K562 (cell line): ENCODE measurements at regions of chr19 and their contacts with region 1.

Region 1: DNA sequence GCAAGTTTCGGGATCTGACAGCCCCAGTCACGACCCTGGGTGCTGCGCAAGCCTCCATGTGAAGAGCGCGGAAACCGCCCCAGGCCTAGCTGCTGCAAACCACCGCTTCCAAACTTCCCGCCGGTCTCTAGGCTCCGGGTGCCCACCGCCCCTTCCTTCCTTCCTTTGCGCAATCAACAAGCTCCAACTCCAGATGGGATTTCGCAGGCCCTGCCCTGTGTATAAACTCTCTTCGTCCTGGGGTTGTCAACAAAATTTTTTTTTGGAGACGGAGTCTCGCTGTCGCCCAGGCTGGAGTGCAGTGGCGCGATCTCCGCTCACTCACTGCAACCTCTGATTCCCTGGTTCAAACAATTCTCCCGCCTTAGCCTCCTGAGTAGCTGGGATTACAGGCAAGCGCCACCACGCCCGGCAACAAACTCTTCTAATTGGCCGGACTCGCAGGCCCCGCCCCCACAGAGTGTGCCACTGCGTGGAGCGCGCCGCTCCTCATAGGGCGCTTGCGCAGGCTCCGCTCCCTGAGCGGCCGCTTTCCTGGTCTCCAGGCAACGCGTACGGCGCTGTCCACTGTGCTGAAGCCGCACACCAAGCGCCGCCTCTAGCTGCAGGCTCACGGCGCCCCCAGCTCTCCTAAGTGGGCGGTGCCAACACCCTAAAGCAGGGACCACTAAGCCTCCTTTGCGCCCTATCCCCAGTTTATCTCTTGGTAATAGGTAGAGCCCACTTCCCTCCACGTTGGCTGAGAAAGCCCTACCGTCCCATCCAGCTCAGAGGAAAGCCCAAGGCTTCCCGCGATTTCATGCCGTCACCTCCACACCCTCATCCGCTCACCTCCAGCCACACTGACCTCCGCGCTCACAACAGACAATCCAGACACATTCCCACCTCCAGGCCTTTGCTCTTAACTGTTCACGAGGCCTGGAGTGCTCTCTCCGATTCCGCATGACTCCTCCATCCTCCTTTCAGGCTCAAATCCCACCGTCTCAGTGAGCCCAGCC is 5.5 kb upstream of the QTRT1 start:
- DNase-seq: peak; percentile 96 to 98 (median 98)
- ATAC-seq: peak; percentile 99
- H3K4me3 ChIP-seq: 0 out of 2 replicates have a peak overlapping the region, but pooled peaks have one; percentile 8
- H3K27ac ChIP-seq: no peak overlapping the region
- H3K4me1 ChIP-seq: peaks cover 6 to 19% of the 10 kb centered on the region in 2 experiments; a peak in 4 of 5 replicates
- H3K27me3 ChIP-seq: peaks cover 4 to 7% of the 10 kb centered on the region in 2 experiments; a peak in 2 of 5 replicates
- CTCF ChIP-seq: peak in 2 of 3 experiments; percentile 16 to 26; a peak in 2 of 6 replicates
- EP300 ChIP-seq: no peak
- POLR2A ChIP-seq: no peak; the same call in 1 of the 2 replicates
- RAD21 ChIP-seq: peak; percentile 15 to 26; a peak in 2 of 4 replicates

Region 2: GRCh38 chr19:10403137-10404021 is 292.3 kb before region 1 on chr19 and contains the start of gene CDC37:
- CTCF ChIA-PET with region 1: no interaction called
- POLR2A ChIA-PET with region 1: no interaction called
- in situ Hi-C with region 1: no loop called
- intact Hi-C with region 1: loop called (anchors 5 kb)
- DNase-seq: peak; percentile 94 to 97 (median 96)
- ATAC-seq: peak; percentile 87
- H3K4me3 ChIP-seq: peak within 1 kb of the TSS; percentile 99
- H3K27ac ChIP-seq: peak within 1 kb of the TSS; percentile 76
- H3K4me1 ChIP-seq: peaks cover 18 to 50% of the 10 kb centered on the region in 2 experiments
- H3K27me3 ChIP-seq: no peaks in the 10 kb centered on the region
- CTCF ChIP-seq: no peak
- EP300 ChIP-seq: no peak
- POLR2A ChIP-seq: peak; percentile 90
- RAD21 ChIP-seq: no peak
- polyA plus RNA-seq, gene CDC37: 6.6 to 12.8 TPM

Region 3: DNA sequence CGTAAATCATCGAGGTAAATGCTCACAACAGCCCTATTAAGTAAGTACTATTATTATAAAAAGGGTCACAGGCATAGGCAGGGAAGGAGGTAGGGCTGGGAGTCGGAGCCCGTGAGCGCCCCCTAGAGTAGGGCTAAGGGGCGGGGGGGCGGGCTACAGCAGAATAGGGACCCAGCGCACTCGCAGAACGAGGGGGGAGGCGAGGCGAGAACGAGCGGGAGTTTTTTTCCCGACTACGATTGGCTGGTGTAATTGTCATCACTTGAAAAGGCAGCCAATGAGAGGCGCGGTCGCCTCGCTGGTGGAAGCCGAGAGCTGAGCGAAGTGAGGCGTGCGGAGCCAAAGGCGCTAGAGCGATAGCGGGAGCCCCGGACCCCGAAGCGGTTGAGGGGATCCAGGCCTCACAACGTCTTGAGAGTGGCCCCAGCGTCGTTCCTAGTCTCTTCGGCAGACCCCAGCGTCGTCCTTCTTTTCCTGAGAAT is 216.8 kb before region 1 on chr19:
- CTCF ChIA-PET with region 1: interaction called, 14 read pairs
- POLR2A ChIA-PET with region 1: interaction called, 5 read pairs
- in situ Hi-C with region 1: loop called (anchors 5 kb)
- intact Hi-C with region 1: loop called (anchors 5 kb)
- DNase-seq: peak; percentile 91 to 96 (median 94)
- ATAC-seq: peak; percentile 96
- H3K4me3 ChIP-seq: no peak overlapping the region
- H3K27ac ChIP-seq: no peak overlapping the region
- H3K4me1 ChIP-seq: peaks cover 14 to 26% of the 10 kb centered on the region in 2 experiments; a peak in 4 of 5 replicates
- H3K27me3 ChIP-seq: no peaks in the 10 kb centered on the region
- CTCF ChIP-seq: peak; percentile 61 to 78 (median 62)
- EP300 ChIP-seq: no peak
- POLR2A ChIP-seq: 0 out of 2 replicates have a peak, but pooled peaks have one; percentile 44
- RAD21 ChIP-seq: no peak

Region 4: DNA sequence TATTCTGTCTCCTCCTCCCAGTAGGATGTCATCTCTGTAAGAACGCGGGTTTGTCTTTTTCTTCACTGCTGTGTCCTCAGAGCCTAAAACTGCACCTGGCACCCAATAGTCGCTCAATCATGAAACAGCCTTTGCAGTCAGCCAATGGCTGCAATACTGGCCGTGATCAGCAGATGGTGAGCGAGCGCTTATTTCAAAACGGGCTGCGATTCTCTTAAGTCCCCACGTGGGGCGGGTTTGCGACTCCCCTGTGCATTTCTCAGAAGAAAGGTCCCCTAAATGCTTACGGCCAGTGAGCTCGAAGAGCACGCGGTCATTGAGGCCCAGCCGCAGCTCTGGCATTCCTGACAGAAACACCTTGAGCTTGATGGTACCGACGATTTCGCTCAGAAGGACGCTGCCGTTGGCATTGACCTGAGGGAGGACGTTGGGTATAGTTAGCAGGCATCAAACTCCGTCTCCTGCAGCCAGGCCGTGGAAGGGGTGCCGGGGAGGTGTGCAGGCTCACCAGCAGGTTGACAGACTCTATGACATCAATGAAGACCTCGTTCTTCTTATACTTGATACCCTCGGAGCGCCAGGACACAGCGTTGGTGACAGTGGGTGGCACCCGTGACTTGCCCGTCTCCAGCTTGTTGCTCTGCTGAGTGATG is 114.6 kb before region 1 on chr19:
- CTCF ChIA-PET with region 1: interaction called, 50 read pairs
- POLR2A ChIA-PET with region 1: interaction called, 5 read pairs
- in situ Hi-C with region 1: loop called (anchors 5 kb)
- intact Hi-C with region 1: loop called (anchors 1 kb)
- DNase-seq: peak; percentile 78 to 96 (median 82)
- ATAC-seq: peak; percentile 87
- H3K4me3 ChIP-seq: no peak overlapping the region
- H3K27ac ChIP-seq: no peak overlapping the region
- H3K4me1 ChIP-seq: peaks cover 12 to 19% of the 10 kb centered on the region in 2 experiments; a peak in 4 of 5 replicates
- H3K27me3 ChIP-seq: no peaks in the 10 kb centered on the region
- CTCF ChIP-seq: peak; percentile 100
- EP300 ChIP-seq: no peak
- POLR2A ChIP-seq: no peak
- RAD21 ChIP-seq: peak; percentile 99 to 100

Region 5: DNA sequence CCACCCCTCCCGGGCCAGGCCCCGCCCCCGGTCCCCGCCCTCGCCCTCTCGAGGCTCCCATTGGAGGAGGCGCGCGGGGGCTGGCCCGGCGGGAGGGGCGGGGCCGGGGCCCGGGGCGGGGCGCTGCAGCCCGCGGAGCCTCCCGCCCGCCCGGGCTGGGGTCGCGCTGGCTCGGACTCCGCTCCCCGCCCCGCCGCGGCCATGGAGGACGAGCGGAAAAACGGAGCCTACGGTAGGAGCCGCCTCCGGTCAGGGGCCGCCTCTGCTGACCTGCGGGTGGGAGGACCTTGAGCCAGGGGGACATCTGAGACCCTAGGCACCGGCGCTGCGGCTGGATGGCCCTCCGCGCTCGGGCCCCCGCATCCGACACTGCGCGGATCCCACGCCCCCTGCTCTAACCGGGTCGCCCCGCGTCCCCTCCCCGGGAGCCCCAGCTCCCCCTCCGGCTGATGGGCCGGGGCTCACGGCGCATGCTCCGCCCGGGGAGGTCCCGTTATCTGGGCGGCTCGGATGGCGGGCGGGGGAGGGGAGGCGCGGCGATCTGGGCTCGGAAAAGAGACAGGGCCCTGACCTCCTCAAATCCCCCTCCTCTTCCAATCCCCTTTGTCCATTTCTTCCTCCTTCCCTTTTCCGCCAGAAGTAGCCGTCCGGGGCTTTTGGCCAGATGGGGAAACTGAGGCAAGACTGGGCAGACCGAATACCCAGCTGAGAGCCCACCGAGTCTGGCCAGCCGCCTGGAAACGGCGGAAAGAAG is 93.2 kb before region 1 on chr19:
- CTCF ChIA-PET with region 1: no interaction called
- POLR2A ChIA-PET with region 1: no interaction called
- in situ Hi-C with region 1: no loop called
- intact Hi-C with region 1: no loop called
- DNase-seq: peak; percentile 86 to 99 (median 98)
- ATAC-seq: peak; percentile 97
- H3K4me3 ChIP-seq: peak overlapping the region; percentile 98
- H3K27ac ChIP-seq: peak overlapping the region; percentile 91
- H3K4me1 ChIP-seq: peaks cover 24 to 29% of the 10 kb centered on the region in 2 experiments
- H3K27me3 ChIP-seq: peaks cover 4 to 9% of the 10 kb centered on the region in 2 experiments; a peak in 3 of 5 replicates
- CTCF ChIP-seq: no peak
- EP300 ChIP-seq: no peak
- POLR2A ChIP-seq: peak; percentile 72
- RAD21 ChIP-seq: no peak

Region 6: GRCh38 chr19:10653715-10654492 is 41.8 kb before region 1 on chr19 and contains the start of gene ILF3:
- CTCF ChIA-PET with region 1: interaction called, 3 read pairs
- POLR2A ChIA-PET with region 1: interaction called, 7 read pairs
- in situ Hi-C with region 1: no loop called
- intact Hi-C with region 1: loop called (anchors 2 kb)
- DNase-seq: peak; percentile 90 to 100 (median 94)
- ATAC-seq: peak; percentile 86
- H3K4me3 ChIP-seq: peak within 1 kb of the TSS; percentile 90
- H3K27ac ChIP-seq: peak within 1 kb of the TSS; percentile 99
- H3K4me1 ChIP-seq: peaks cover 33 to 35% of the 10 kb centered on the region in 2 experiments; a peak in 4 of 5 replicates
- H3K27me3 ChIP-seq: no peaks in the 10 kb centered on the region
- CTCF ChIP-seq: no peak
- EP300 ChIP-seq: peak; percentile 23; the same call in 1 of the 2 replicates
- POLR2A ChIP-seq: peak; percentile 94
- RAD21 ChIP-seq: no peak
- polyA plus RNA-seq, gene ILF3: 26.0 to 27.5 TPM

Region 7: GRCh38 chr19:10682397-10683063 is 13.2 kb before region 1 on chr19:
- CTCF ChIA-PET with region 1: interaction called, 3 read pairs
- POLR2A ChIA-PET with region 1: interaction called, 13 read pairs
- in situ Hi-C with region 1: no loop called
- intact Hi-C with region 1: no loop called
- DNase-seq: no peak
- ATAC-seq: no peak
- H3K4me3 ChIP-seq: no peak overlapping the region
- H3K27ac ChIP-seq: no peak overlapping the region
- H3K4me1 ChIP-seq: peaks cover 0 to under 1% of the 10 kb centered on the region in 2 experiments; a peak in 1 of 5 replicates
- H3K27me3 ChIP-seq: no peaks in the 10 kb centered on the region
- CTCF ChIP-seq: no peak
- EP300 ChIP-seq: no peak
- POLR2A ChIP-seq: no peak
- RAD21 ChIP-seq: no peak